Activated CD4-positive, alpha-beta T cell treated with anti-CD3 and anti-CD28 coated beads, Interleukin-2, amount 10 ng/mL, durations not matched to agents 24 days and 14 days (primary cell): ENCODE measurements at regions of chr21 and their contacts with region 1.

Region 1: DNA sequence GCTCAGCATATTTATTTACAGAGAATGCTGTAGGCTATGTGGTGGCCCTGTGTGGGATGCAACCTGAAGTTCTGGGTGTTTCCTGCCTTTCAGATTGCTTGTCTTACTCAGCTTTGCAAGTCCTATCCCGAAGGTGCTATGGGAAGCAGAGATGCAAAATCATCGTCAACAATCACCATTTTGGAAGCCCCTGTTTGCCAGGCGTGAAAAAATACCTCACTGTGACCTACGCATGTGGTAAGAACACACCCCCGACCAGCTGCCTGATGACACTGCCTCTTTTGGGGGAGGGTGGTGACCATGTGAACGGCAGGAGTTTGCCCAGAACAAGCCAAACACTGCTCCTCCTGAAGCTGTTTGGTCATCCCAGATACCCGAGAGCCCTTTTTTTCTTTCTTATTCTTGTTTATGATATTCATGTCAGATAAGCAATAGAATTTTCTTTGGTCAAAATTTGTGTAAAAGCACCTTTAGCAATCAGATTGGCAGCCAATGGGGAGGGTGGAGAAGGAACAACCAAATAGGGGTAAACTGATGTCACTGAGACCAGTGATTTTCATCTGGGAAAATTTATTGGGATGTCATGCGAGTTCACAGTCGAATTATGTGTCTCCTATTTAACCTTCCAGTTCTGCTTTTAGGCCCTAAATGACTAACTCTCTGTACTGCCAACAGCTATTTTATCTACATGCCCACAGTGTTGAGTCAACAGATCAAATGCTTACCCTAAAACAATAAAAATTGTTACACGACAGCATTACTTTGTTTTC is 82.6 kb downstream of the EVA1C start:
- DNase-seq: no peak
- H3K4me3 Mint-ChIP-seq: no peak overlapping the region
- H3K27ac Mint-ChIP-seq: no peak overlapping the region
- H3K4me1 Mint-ChIP-seq: peaks cover 13% of the 10 kb centered on the region
- H3K27me3 Mint-ChIP-seq: no peaks in the 10 kb centered on the region

Region 2: DNA sequence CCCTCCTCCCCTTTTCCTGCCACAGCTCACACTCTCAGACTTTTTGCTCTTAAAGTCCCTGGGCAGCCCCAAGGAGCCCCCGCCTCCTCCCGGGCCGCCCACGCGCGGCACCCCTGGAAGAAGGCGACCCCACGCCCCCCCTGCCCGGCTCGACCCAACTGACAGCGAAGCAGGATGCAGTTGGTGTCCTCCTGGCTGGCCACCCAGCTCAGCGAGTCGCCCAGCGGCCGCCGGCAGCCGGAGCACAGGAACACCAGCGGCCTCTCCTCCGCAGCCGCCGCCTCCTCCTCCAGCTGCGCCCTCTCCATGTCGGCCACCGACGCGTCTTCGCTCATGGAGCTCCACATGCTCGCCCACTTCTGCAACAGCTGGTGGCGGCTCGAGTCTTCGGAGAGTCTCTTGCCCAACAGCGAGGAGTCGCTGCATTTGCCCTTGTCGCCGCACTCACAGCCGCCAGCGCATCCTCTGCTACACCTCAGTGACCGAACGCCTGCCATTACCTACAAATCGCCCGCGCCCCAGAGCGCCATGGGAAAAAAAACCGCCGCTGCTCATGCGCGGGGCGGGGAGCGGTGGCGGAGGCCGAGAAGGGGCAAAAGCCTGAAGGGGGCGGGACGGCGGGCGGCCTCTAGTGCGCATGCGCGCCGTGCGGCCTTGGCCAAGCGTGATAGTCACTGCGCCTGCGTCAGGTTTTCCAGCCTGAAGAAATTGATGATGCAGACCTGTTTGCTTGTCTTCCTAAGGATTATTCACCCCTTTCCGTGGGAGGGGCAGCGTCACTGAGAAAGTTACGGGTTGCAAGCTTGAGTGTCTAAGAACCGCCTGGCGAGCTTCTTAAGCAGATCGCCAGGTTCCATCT is 216.4 kb before region 1 on chr21 and contains the start of gene MIS18A:
- intact Hi-C with region 1: loop called (anchors 2 kb)
- DNase-seq: peak; percentile 99
- H3K4me3 Mint-ChIP-seq: peak within 1 kb of the TSS; percentile 100
- H3K27ac Mint-ChIP-seq: peak within 1 kb of the TSS; percentile 98
- H3K4me1 Mint-ChIP-seq: peaks cover 32% of the 10 kb centered on the region
- H3K27me3 Mint-ChIP-seq: peaks cover 3% of the 10 kb centered on the region
- total RNA-seq, gene MIS18A: 27.8 and 31.3 TPM in 2 replicates

Region 3: DNA sequence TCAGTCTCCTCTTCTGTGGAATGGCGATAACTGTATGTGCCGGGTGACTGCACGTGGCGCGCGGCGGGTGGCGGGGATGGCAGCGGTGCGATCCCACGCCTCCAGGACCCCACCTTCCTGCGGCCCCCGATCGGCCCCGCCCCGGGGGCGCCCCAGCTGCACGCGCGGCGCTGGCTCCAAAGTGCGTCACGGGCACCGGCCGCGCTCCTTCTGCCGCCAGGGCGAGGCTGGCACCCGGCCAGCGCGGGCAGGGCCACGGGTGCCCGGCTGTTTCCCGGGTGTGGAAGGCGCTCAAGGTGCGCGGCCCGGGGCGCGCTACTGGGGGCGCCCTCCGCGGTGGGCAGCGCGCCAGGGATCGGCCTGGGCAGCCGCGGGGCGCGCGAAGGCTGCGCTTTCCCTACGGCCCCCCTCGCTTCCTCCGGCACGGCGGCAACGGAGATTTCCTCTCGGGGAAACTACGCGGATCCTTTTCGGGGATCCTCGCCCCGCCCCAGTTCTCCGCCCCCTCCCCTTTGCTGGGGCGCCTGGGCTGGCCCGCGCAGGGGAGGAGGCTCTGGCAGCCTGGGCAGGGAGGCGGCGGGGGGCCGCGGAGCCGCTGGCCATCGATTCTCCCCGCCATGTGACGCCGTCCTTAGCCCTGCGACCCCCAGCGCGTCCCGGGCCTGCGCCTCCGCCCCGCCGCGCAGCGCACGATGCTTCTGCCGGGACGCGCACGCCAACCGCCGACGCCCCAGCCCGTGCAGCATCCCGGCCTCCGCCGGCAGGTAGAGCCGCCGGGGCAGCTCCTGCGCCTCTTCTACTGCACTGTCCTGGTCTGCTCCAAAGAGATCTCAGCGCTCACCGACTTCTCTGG is 82.7 kb before region 1 on chr21 and contains the start of gene EVA1C:
- intact Hi-C with region 1: loop called (anchors 1 kb)
- DNase-seq: peak; percentile 87
- H3K4me3 Mint-ChIP-seq: peak within 1 kb of the TSS; percentile 95
- H3K27ac Mint-ChIP-seq: peak within 1 kb of the TSS; percentile 94
- H3K4me1 Mint-ChIP-seq: peaks cover 16% of the 10 kb centered on the region
- H3K27me3 Mint-ChIP-seq: peaks cover 2% of the 10 kb centered on the region
- total RNA-seq, gene EVA1C: 6.0 and 8.2 TPM in 2 replicates

Region 4: GRCh38 chr21:32475164-32475812 is 19.8 kb before region 1 on chr21:
- intact Hi-C with region 1: loop called (anchors 2 kb)
- DNase-seq: no peak
- H3K4me3 Mint-ChIP-seq: no peak overlapping the region
- H3K27ac Mint-ChIP-seq: no peak overlapping the region
- H3K4me1 Mint-ChIP-seq: peaks cover 13% of the 10 kb centered on the region
- H3K27me3 Mint-ChIP-seq: no peaks in the 10 kb centered on the region

Region 5: GRCh38 chr21:32569261-32570230 is 74.4 kb after region 1 on chr21:
- intact Hi-C with region 1: loop called (anchors 5 kb)
- DNase-seq: peak; percentile 93
- H3K4me3 Mint-ChIP-seq: peak overlapping the region; percentile 95
- H3K27ac Mint-ChIP-seq: peak overlapping the region; percentile 16
- H3K4me1 Mint-ChIP-seq: peaks cover 12% of the 10 kb centered on the region
- H3K27me3 Mint-ChIP-seq: peaks cover 8% of the 10 kb centered on the region